ENCODE measurements at regions of chr1 and their contacts with region 1.

Region 1: DNA sequence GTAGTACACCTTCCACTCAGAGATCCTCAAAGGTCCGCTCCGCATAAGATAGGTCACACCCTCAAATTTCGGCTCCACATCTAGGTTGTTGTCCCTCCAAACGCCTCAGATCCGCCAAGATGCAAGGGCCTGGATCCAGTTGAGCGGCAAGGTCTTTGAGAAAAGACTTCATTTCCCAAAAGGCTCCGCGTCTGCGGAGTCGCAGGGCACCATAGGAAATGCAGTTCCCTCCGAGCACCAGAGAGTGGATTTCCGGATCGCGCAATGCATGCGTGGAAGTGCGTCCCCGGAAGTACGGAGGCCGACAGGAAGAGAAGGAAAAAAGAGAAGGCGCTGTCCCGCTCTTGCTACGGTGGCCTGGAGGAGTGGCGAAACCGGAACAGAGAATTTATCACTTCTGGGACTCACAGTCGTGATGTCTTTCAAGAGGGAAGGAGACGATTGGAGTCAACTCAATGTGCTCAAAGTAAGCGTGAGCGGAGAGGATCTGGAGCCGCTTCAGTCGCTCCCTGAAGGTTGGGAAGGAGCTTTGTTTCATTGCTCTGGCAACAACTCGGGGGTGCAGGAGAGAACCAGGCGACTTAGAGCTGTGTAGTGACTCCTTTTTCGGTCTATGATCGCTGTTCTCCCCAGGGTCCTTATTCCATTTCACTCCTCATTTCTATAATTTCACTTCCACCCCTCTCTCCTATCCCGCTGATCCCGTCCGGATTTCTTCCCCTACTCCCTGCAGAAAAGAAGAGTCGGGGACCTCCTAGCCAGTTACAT is at the starts of genes LYSMD1 and SCNM1:
- DNase-seq: peak; percentile 98
- ATAC-seq: peak; percentile 96
- H3K4me3 Mint-ChIP-seq: peak within 1 kb of the TSS; percentile 92
- H3K27ac Mint-ChIP-seq: peak within 1 kb of the TSS; percentile 98
- H3K4me1 Mint-ChIP-seq: peaks cover 48% of the 10 kb centered on the region
- H3K27me3 Mint-ChIP-seq: no peaks in the 10 kb centered on the region
- total RNA-seq, gene LYSMD1: 4.3 to 5.1 TPM
- total RNA-seq, gene SCNM1: 64.3 to 90.8 TPM

Region 2: GRCh38 chr1:151146412-151147140 is 19.3 kb before region 1 on chr1 and contains the start of gene SEMA6C:
- CTCF ChIA-PET with region 1: interaction called, 3 read pairs
- POLR2A ChIA-PET with region 1: no interaction called
- intact Hi-C with region 1: loop called in 1 of 2 experiments (anchors 1 kb)
- DNase-seq: peak; percentile 92
- ATAC-seq: peak; percentile 100
- H3K4me3 Mint-ChIP-seq: peak within 1 kb of the TSS; percentile 79
- H3K27ac Mint-ChIP-seq: peak within 1 kb of the TSS; percentile 48
- H3K4me1 Mint-ChIP-seq: peaks cover 10% of the 10 kb centered on the region
- H3K27me3 Mint-ChIP-seq: no peaks in the 10 kb centered on the region
- total RNA-seq, gene SEMA6C: 3.2 to 3.5 TPM

Region 3: GRCh38 chr1:151189638-151190445 is 23.9 kb after region 1 on chr1 and contains the start of gene VPS72:
- CTCF ChIA-PET with region 1: interaction called, 3 read pairs
- POLR2A ChIA-PET with region 1: interaction called, 14 read pairs
- intact Hi-C with region 1: loop called in 1 of 2 experiments (anchors 1 kb)
- DNase-seq: peak; percentile 93
- ATAC-seq: peak; percentile 96
- H3K4me3 Mint-ChIP-seq: peak within 1 kb of the TSS; percentile 96
- H3K27ac Mint-ChIP-seq: peak within 1 kb of the TSS; percentile 98
- H3K4me1 Mint-ChIP-seq: peaks cover 27% of the 10 kb centered on the region
- H3K27me3 Mint-ChIP-seq: no peaks in the 10 kb centered on the region
- total RNA-seq, gene VPS72: 77.1 to 77.8 TPM

Measured in activated CD4-positive, alpha-beta T cell treated with anti-CD3 and anti-CD28 coated beads for 36 hours (primary cell).